HEK293T (cell line): ENCODE measurements at regions of chr1 and their contacts with region 1.

Region 1: GRCh38 chr1:26864610-26865527 is 1.9 kb downstream of the SFN start:
- DNase-seq: peak; percentile 95

Region 2: DNA sequence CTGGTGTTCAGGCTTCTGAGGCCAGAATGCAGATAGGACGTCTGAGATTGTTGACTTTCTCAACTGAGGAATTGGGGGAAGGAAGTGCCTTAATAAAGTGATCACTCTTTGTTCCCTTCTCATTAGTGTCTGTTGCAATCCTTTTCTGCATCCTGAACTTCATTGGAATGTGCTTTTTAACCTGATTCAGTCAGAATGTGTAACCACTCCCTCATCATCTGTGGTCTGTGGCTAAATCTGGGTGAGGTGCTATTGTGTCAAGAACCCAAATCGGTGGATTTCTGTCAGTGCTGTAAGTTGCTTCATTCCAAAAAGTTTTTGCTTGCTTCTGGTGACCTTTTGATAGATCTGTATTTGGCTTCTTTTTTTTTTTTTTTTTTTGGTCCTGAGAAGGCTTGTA is 130.9 kb before region 1 on chr1:
- CTCF ChIA-PET with region 1: no interaction called
- POLR2A ChIA-PET with region 1: no interaction called
- DNase-seq: no peak

Region 3: DNA sequence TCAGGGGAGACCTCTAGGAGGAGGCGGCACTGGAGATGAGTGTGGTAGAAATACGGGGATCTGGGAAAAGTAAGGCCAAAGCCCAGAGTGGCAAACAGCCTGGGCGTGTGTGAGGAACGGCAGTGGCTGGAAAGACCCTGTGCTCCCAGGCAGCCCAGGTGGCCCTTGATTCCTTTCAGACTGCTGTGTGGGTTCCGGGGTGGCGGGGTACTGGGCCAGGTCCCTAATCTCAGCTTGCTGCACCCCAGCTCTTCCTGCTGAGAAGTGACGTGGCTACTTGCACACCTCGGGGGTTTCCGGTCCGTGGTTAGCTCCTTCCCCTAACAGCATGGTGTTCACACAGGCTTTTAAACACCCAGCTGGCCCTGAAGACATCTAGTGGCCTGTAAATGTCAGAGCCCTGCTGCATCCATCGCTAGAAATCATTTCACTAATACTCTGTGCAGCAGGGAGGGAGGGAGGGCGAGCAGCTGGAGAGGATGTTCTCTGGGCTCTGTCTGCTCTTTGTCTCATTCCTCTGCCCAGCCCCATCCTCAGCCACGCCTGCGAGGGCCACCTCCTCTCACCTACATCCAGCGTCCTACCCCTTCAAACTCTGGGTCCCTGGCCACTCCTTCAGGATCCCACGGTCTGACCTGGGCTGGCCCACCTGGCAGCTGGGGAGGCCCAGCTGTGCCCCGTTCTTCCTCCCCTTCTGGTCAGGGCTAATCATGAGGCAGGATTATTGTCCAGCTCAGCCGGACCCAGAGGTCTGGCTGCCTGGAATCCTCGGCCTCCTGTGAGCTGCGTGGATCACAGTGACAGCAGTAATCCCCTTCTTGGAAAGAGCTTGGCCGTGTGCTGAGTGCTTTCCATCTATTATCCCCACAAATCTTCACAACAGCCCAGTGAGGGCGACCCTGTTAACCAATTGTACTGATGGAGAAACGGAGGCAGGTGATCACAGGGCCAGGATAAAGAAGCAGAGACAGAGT is 31.1 kb before region 1 on chr1:
- CTCF ChIA-PET with region 1: interaction called, 3 read pairs
- POLR2A ChIA-PET with region 1: interaction called, 21 read pairs
- DNase-seq: no peak

Region 4: DNA sequence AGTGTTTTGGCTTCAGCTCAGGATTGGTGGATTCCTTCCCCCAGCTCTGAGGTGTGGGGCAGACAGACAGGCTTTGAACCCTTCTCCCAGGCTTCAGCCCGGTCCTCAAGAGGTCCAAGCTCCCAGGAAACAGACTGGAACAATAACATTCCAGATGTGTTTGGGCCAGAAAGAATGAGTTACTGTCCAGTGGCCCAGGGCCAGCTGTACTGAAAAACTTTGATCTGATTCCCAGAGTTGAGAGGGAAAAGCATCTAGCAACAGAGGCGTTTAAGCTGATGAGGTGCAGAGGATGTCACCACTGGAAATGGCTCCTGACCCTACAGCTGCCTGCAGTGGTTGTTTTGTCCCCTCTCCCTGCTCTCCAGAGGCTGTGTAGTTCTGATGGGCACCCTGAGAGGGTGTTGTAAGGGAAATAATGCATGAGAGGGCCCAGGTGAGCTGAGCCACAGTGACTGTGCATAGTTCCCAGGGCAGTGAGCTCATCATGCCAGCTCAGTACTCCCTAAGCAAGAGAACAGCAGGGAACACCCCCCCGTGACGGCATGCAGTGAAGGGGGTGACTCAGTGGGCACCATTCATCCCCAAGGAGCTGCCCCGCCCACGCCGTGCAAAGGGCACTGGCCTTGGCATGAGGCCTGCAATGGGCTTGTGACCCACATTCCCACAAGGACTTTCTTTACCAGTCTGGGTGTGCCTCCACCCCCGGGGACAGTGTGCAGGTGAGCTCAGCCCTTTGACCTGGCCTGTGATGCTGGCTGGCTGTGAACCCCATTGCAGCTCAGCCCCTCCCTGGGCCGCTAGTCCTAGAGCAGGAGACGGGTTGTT is 15.7 kb before region 1 on chr1:
- CTCF ChIA-PET with region 1: interaction called, 4 read pairs
- POLR2A ChIA-PET with region 1: interaction called, 26 read pairs
- DNase-seq: no peak

Region 5: GRCh38 chr1:26874896-26875295 is 10.0 kb after region 1 on chr1:
- CTCF ChIA-PET with region 1: interaction called, 4 read pairs
- POLR2A ChIA-PET with region 1: interaction called, 16 read pairs
- DNase-seq: no peak

Region 6: DNA sequence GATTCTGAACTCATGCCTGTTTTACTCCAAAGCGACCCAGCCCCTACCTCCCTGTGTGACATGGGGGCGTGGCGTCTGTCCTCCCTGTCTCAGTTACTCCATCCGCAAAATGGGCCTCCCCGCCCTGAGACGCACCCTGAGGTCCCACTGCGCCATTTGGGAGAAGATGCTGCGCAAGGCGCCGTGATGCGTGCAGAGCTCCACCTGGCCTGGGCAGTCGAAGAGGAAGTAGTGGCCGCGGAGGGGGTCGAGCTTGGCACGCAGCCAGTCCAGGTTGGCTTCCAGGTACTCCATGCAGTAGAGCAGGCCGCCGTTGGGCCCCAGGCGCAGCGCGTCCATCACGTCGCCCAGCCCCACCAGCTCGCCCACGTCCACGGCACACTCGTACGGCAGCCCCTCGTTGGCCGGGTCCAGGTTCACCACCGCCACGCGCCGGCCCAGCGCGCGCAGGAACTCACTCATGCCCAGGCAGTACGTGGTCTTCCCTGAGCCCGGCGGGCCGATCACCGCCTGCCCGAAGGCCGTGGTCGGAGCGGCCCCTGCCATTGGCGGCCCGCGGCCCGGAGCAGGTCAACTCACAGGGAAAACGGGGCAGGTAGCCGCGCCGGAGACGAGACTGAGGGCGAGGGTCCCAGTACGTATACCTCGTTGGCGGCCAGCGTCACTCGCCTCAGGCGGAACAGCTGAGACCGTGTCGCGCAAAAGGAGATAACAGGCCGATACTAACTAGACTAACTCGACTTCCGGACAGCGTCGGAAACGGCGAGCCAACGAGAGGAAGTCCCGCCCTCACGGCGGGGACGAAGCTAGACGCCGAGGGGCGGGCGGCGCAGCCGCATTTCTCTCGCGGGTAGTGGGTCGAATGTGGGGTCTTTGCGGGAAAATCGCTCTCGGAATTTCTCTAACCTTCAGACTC is 24.9 kb after region 1 on chr1 and contains the start of gene GPN2:
- CTCF ChIA-PET with region 1: interaction called, 3 read pairs
- POLR2A ChIA-PET with region 1: interaction called, 31 read pairs
- DNase-seq: peak; percentile 88

Region 7: GRCh38 chr1:26900001-26900814 is 35.3 kb after region 1 on chr1 and contains the start of gene GPATCH3:
- CTCF ChIA-PET with region 1: no interaction called
- POLR2A ChIA-PET with region 1: interaction called, 11 read pairs
- DNase-seq: peak; percentile 94

Region 8: GRCh38 chr1:26959722-26960615 is 95.1 kb after region 1 on chr1 and contains the start of gene KDF1:
- CTCF ChIA-PET with region 1: no interaction called
- POLR2A ChIA-PET with region 1: no interaction called
- DNase-seq: no peak